ENCODE measurements at regions of chr20 and their contacts with region 1.

Region 1: GRCh38 chr20:53070706-53071392 is 98.7 kb downstream of the TSHZ2 start:
- DNase-seq: peak; percentile 47
- H3K4me3 Mint-ChIP-seq: peak overlapping the region; percentile 18
- H3K27ac Mint-ChIP-seq: peak overlapping the region; percentile 93
- H3K4me1 Mint-ChIP-seq: peaks cover 56% of the 10 kb centered on the region
- H3K27me3 Mint-ChIP-seq: no peaks in the 10 kb centered on the region

Region 2: GRCh38 chr20:52869698-52870501 is 200.9 kb before region 1 on chr20:
- CTCF ChIA-PET with region 1: no interaction called
- POLR2A ChIA-PET with region 1: no interaction called
- intact Hi-C with region 1: loop called (anchors 1 kb)
- DNase-seq: no peak
- H3K4me3 Mint-ChIP-seq: no peak overlapping the region
- H3K27ac Mint-ChIP-seq: peak overlapping the region; percentile 64
- H3K4me1 Mint-ChIP-seq: peaks cover 24% of the 10 kb centered on the region
- H3K27me3 Mint-ChIP-seq: peaks cover 2% of the 10 kb centered on the region

Region 3: DNA sequence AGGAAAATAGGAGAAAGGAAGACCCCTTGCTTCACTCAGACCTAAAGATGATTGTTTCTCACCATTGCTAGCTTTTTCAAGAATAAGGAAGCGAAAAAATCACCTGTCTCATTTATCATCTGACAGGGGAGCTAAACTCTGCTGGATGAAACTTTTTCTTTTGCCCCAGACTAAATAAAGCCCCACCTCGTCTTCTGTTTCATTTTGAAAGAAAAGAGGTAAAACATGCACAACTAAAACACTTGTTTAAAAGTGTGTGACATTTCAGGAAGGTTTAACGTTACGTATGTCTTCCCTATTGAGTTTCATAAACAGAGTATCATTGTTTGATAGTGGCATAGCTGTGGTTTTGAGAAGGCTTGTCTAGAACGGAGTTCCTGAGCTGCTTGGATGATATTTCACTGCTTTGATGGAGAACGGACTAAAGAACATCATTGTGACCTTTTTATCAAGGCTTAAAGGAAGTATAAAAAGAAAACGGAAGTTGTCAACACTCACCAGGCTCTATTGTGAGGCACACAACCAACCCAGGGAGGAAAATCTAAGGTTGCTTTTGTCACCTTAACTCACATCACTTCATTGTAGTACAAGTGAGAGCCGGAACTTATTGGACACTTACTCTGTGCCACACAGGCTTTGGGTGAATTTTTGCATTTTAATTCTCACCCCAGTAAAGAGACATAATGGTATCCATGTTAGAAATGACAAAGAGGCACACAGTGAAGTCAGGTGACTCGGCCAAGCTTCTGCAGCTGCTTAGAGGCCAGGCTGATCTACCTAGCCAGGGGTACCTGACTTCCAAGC is 69.1 kb before region 1 on chr20:
- CTCF ChIA-PET with region 1: no interaction called
- POLR2A ChIA-PET with region 1: no interaction called
- intact Hi-C with region 1: loop called (anchors 2 kb)
- DNase-seq: peak; percentile 48
- H3K4me3 Mint-ChIP-seq: peak overlapping the region; percentile 70
- H3K27ac Mint-ChIP-seq: peak overlapping the region; percentile 96
- H3K4me1 Mint-ChIP-seq: peaks cover 72% of the 10 kb centered on the region
- H3K27me3 Mint-ChIP-seq: no peaks in the 10 kb centered on the region

Region 4: DNA sequence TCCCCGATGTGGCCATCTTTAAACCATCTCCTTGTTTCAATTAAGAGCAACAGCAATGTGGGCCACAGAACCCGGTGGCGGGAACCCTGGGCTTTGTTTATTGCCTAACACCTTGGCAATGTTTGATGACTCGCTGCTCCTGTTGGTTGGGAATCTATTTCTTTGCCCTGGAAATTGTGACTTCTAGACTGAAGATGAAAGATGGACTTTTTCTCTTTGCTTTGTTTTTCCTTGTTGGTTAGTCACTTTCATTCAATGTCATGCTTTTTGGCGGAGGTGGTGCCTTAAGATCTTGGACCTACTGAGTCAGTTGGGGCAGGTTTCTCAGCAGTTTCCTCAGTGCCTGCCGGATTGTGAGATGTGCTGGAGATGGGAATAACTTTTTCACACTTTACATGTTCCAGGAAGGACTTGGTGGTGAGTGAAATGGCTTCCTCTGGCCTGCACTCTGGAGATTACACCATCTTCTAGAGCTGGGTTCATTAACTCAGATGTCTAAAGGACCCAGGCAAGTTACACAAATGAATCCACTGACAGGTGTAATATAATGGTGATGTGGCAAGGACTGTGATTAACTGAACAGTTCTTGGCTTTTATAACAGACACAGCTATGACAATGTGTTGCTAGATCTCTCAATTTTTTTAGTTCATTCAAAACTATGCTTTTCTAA is 42.4 kb before region 1 on chr20:
- CTCF ChIA-PET with region 1: no interaction called
- POLR2A ChIA-PET with region 1: interaction called, 10 read pairs
- intact Hi-C with region 1: loop called (anchors 1 kb)
- DNase-seq: peak; percentile 66
- H3K4me3 Mint-ChIP-seq: peak overlapping the region; percentile 2
- H3K27ac Mint-ChIP-seq: peak overlapping the region; percentile 80
- H3K4me1 Mint-ChIP-seq: peaks cover 70% of the 10 kb centered on the region
- H3K27me3 Mint-ChIP-seq: no peaks in the 10 kb centered on the region

Measured in activated CD4-positive, alpha-beta memory T cell treated with anti-CD3 and anti-CD28 coated beads for 36 hours (primary cell).